ENCODE measurements at regions of chr17 and their contacts with region 1.

Region 1: DNA sequence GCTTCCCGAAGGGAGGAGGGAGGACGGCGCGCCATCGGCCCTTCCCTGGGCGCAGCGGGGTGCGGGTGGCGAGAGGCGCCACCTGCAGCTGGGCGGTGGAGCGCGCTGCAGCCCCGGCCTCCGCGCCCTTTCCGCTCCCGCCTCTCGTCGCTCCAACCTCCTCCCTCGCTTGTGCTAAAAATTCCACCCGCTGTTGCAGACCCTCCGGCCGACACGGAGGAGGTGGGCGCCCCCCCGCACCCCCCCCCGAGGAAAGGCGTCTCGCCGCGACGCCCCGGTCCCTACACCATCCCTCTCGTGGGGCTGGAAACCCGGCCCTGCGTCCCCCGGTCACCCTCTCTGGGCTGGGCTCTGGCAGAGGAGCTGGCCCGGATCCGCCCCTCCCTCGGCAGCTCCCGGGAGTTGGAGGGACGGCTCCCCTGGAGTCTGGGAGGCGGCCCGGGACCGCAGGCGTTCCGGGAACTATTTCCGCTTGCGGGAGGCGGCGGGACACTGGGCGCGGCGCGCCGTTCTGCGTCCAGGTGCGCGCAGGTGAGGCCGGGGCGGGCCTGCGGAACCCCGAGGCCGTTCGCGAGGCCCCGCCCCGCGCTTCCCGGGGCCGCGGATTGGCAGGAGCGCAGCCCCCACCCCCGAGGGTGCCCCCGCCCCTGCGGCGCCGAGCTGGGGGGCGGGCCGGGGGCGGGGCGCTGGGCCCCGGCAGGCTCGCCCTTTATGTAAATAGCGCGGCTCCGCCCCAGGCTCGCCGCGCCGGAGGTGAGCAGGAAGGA is at the start of gene LLGL2:
- DNase-seq: peak; percentile 74 to 94 (median 85)
- ATAC-seq: peak; percentile 94
- H3K4me3 ChIP-seq: peak within 1 kb of the TSS; percentile 70 to 78
- H3K4me3 Mint-ChIP-seq: peak within 1 kb of the TSS; percentile 82
- H3K27ac ChIP-seq: peak within 1 kb of the TSS; percentile 21 to 47
- H3K27ac Mint-ChIP-seq: no peak within 1 kb of the TSS
- H3K4me1 ChIP-seq: peaks cover 22% of the 10 kb centered on the region
- H3K4me1 Mint-ChIP-seq: peaks cover 13% of the 10 kb centered on the region
- H3K27me3 ChIP-seq: no peaks in the 10 kb centered on the region
- H3K27me3 Mint-ChIP-seq: no peaks in the 10 kb centered on the region
- CTCF ChIP-seq: no peak
- total RNA-seq, gene LLGL2: 32.7 to 36.4 TPM

Region 2: GRCh38 chr17:75430159-75430974 is 94.8 kb before region 1 on chr17:
- CTCF ChIA-PET with region 1: interaction called, 3 read pairs
- POLR2A ChIA-PET with region 1: no interaction called
- intact Hi-C with region 1: loop called in 1 of 2 experiments (anchors 1 kb)
- DNase-seq: no peak
- ATAC-seq: no peak
- H3K4me3 ChIP-seq: no peak overlapping the region
- H3K4me3 Mint-ChIP-seq: no peak overlapping the region
- H3K27ac ChIP-seq: no peak overlapping the region
- H3K27ac Mint-ChIP-seq: no peak overlapping the region
- H3K4me1 ChIP-seq: peaks cover 6% of the 10 kb centered on the region
- H3K4me1 Mint-ChIP-seq: peaks cover 11% of the 10 kb centered on the region
- H3K27me3 ChIP-seq: no peaks in the 10 kb centered on the region
- H3K27me3 Mint-ChIP-seq: peaks cover 5% of the 10 kb centered on the region
- CTCF ChIP-seq: no peak

Region 3: GRCh38 chr17:75456417-75457046 is 68.6 kb before region 1 on chr17 and contains the start of gene TMEM94:
- CTCF ChIA-PET with region 1: no interaction called
- POLR2A ChIA-PET with region 1: interaction called, 9 read pairs
- intact Hi-C with region 1: loop called in 1 of 2 experiments (anchors 2 kb)
- DNase-seq: peak; percentile 80 to 98 (median 91)
- ATAC-seq: peak; percentile 97
- H3K4me3 ChIP-seq: peak within 1 kb of the TSS; percentile 100
- H3K4me3 Mint-ChIP-seq: peak within 1 kb of the TSS; percentile 96
- H3K27ac ChIP-seq: peak within 1 kb of the TSS; percentile 75 to 82
- H3K27ac Mint-ChIP-seq: peak within 1 kb of the TSS; percentile 92
- H3K4me1 ChIP-seq: peaks cover 16% of the 10 kb centered on the region
- H3K4me1 Mint-ChIP-seq: peaks cover 36% of the 10 kb centered on the region
- H3K27me3 ChIP-seq: no peaks in the 10 kb centered on the region
- H3K27me3 Mint-ChIP-seq: peaks cover 3% of the 10 kb centered on the region
- CTCF ChIP-seq: no peak
- total RNA-seq, gene TMEM94: 44.8 to 46.5 TPM

Region 4: GRCh38 chr17:75493476-75494129 is 31.5 kb before region 1 on chr17:
- CTCF ChIA-PET with region 1: no interaction called
- POLR2A ChIA-PET with region 1: no interaction called
- intact Hi-C with region 1: no loop called
- DNase-seq: no peak
- ATAC-seq: no peak
- H3K4me3 ChIP-seq: no peak overlapping the region
- H3K4me3 Mint-ChIP-seq: no peak overlapping the region
- H3K27ac ChIP-seq: no peak overlapping the region
- H3K27ac Mint-ChIP-seq: no peak overlapping the region
- H3K4me1 ChIP-seq: peaks cover 14% of the 10 kb centered on the region
- H3K4me1 Mint-ChIP-seq: peaks cover 13% of the 10 kb centered on the region
- H3K27me3 ChIP-seq: no peaks in the 10 kb centered on the region
- H3K27me3 Mint-ChIP-seq: no peaks in the 10 kb centered on the region
- CTCF ChIP-seq: no peak

Region 5: GRCh38 chr17:75504347-75504964 is 20.7 kb before region 1 on chr17:
- CTCF ChIA-PET with region 1: interaction called, 4 read pairs
- POLR2A ChIA-PET with region 1: no interaction called
- intact Hi-C with region 1: loop called in 1 of 2 experiments (anchors 1 kb)
- DNase-seq: peak in 6 of 9 experiments; percentile 48 to 70 (median 58)
- ATAC-seq: peak; percentile 71
- H3K4me3 ChIP-seq: no peak overlapping the region
- H3K4me3 Mint-ChIP-seq: no peak overlapping the region
- H3K27ac ChIP-seq: no peak overlapping the region
- H3K27ac Mint-ChIP-seq: no peak overlapping the region
- H3K4me1 ChIP-seq: peaks cover 6% of the 10 kb centered on the region
- H3K4me1 Mint-ChIP-seq: no peaks in the 10 kb centered on the region
- H3K27me3 ChIP-seq: no peaks in the 10 kb centered on the region
- H3K27me3 Mint-ChIP-seq: no peaks in the 10 kb centered on the region
- CTCF ChIP-seq: peak; percentile 50

Measured in CD8-positive, alpha-beta T cell (primary cell).